Activated T-helper 1 cell treated with anti-CD3 and anti-CD28 coated beads, Interleukin-12 subunit alpha, Interleukin-12 subunit beta, Interleukin-2, Interleukin-4 antibody, amounts not matched to agents 30 ng/mL and 10 ng/mL and 1 ng/mL, durations not matched to agents 14 hours and 24 hours and 36 hours (primary cell): ENCODE measurements at regions of chr14 and their contacts with region 1.

Region 1: GRCh38 chr14:34059855-34060638 is 109.2 kb upstream of the EGLN3 start:
- DNase-seq: peak; percentile 66
- H3K4me3 Mint-ChIP-seq: peak overlapping the region; percentile 83
- H3K27ac Mint-ChIP-seq: peak overlapping the region; percentile 87
- H3K4me1 Mint-ChIP-seq: peaks cover 48% of the 10 kb centered on the region
- H3K27me3 Mint-ChIP-seq: peaks cover 4% of the 10 kb centered on the region

Region 2: GRCh38 chr14:34120238-34120977 is 60.4 kb after region 1 on chr14:
- intact Hi-C with region 1: no loop called
- DNase-seq: no peak
- H3K4me3 Mint-ChIP-seq: no peak overlapping the region
- H3K27ac Mint-ChIP-seq: no peak overlapping the region
- H3K4me1 Mint-ChIP-seq: peaks cover 6% of the 10 kb centered on the region
- H3K27me3 Mint-ChIP-seq: peaks cover 17% of the 10 kb centered on the region

Region 3: GRCh38 chr14:34258318-34258717 is 198.3 kb after region 1 on chr14:
- intact Hi-C with region 1: no loop called
- DNase-seq: no peak
- H3K4me3 Mint-ChIP-seq: no peak overlapping the region
- H3K27ac Mint-ChIP-seq: no peak overlapping the region
- H3K4me1 Mint-ChIP-seq: no peaks in the 10 kb centered on the region
- H3K27me3 Mint-ChIP-seq: peaks cover 13% of the 10 kb centered on the region

Region 4: DNA sequence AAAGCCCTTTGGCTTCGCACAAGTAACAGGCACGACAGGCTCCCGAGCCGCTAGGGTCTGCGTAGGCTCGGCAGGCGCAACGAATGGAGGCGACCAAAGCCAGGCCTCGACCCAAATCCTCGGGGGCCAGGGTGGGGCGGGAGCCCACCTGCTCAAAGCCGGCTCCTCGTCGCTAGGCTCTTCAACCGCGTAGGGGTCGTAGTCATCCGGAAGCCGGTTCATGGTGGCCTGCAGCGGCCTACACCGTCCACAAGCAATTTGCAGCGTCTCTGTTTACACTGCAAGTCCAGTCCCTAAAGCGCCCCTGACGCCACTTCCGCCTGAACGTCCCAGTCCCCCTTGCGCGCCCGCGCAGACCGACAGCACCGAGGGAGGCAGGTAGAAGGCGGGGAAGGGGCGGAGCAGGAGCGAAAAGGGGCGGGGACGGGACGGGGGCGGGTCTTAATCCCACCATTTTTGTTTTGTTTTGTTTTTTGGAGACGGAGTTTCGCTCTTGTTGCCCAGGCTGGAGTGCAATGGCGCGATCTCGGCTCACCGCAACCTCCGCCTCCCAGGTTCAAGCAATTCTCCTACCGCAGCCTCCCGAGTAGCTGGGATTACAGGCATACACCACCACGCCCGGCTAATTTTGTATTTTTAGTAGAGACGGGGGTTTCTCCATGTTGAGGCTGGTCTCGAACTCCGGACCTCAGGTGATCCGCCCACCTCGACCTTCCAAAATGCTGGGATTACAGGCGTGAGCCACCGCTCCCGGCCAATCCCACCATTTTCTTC is 479.5 kb after region 1 on chr14 and contains the start of gene EAPP:
- intact Hi-C with region 1: loop called (anchors 5 kb)
- DNase-seq: peak; percentile 93
- H3K4me3 Mint-ChIP-seq: peak within 1 kb of the TSS; percentile 98
- H3K27ac Mint-ChIP-seq: peak within 1 kb of the TSS; percentile 93
- H3K4me1 Mint-ChIP-seq: peaks cover 18% of the 10 kb centered on the region
- H3K27me3 Mint-ChIP-seq: no peaks in the 10 kb centered on the region
- total RNA-seq, gene EAPP: 34.4 and 35.1 TPM in 2 replicates